Cardiac septum (tissue), 1 donor: ENCODE measurements at regions of chr11 and their contacts with region 1.

Region 1: DNA sequence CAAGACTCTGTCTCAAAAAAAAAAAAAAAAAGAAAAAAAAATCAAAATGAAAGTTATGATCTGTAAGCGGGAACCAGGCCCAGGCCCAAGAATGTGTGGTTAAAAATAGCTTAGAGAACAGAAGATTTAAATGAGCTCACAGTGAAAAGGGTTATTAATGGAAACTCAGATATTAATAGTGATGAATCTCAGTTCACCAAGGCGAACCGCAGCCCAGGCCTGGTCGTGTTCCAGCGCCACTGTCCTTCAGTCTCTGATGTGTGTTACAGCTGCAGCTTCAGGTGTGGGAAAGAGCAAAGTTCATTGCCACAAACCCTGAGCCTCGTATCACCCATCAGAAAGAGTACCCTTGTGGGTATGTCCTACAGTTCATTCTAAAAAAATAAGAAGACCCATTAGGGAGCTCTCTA is 107.1 kb downstream of the GAB2 start:
- DNase-seq: peak; percentile 87

Region 2: DNA sequence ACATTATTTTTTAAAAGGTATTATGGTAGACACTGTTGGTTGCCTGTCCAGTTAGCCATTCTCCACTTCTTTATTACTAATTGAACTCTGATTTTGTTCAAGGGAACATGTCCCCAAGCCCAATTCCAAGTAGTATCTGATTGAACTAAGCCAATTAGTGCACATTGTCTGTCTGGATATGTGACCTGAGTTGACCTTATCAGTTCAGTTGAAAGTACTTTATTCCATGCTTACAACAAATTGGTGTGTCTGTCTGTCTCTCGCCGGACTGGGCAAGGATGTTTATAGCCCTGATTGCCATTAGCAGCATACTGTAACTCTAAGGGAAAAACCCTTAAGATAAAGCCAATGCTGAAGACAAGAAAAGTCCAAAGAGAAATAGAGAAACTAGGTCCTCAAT is 401.7 kb before region 1 on chr11:
- intact Hi-C with region 1: no loop called
- DNase-seq: no peak

Region 3: GRCh38 chr11:78156105-78156830 is 154.2 kb before region 1 on chr11:
- intact Hi-C with region 1: no loop called
- DNase-seq: no peak

Region 4: DNA sequence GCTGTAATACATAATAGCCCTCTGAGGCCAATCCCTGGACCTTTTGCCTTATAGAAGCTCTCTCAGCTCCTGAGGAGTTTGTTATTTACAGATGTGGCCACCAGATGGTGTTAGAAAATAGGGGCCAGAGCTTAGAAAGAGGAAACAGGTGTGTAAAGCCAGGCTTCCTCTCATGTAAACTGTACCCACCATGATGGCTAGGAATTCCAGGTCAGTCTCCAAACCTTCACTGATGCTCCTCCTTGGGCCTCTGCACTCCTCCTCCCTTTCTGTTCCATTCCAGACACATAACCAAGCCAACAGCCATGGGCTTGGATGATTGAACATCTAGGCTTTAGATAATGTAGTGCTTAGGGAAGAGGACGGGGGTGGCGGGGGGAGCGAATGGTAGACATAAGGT is 82.0 kb before region 1 on chr11:
- intact Hi-C with region 1: loop called (anchors 5 kb)
- DNase-seq: no peak

Region 5: DNA sequence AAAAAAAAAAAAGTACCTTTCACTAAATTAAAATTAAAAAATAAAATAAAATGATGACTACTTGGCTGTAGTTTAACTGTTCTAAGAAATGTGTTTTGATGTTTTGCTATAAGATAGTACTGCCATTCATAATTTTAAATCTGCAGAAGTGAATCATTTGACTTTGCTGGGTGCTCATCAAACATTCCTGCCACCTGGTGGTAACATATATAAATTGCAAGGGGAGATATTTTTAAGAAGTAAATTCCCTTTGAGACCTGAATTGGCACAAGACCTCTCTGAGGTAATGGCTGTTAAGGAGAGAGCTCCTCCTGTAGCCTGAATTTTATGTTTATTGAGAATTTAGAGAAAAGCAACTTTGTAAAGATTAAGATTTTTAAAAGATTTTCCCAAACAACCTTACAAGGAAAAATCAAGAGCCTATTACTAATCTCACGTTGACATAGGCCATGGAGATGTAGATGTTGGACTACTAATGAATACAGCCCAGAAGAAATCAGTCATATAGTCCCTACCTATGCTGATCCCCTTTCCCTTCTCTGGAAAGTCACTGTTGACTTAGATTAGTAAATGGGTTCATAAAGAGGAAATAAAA is 276.0 kb after region 1 on chr11:
- intact Hi-C with region 1: no loop called
- DNase-seq: no peak

Region 6: GRCh38 chr11:78659326-78660270 is 349.1 kb after region 1 on chr11:
- intact Hi-C with region 1: no loop called
- DNase-seq: peak; percentile 41